Activated B cell treated with CpG ODN at 0.5 μM for 24 hours (primary cell): ENCODE measurements at regions of chr12 and their contacts with region 1.

Region 1: GRCh38 chr12:122902854-122903692 is 7.1 kb upstream of the VPS37B start:
- DNase-seq: no peak
- ATAC-seq: no peak
- H3K4me3 Mint-ChIP-seq: no peak overlapping the region
- H3K27ac Mint-ChIP-seq: peak overlapping the region; percentile 70
- H3K4me1 Mint-ChIP-seq: peaks cover 53% of the 10 kb centered on the region
- H3K27me3 Mint-ChIP-seq: no peaks in the 10 kb centered on the region
- CTCF ChIP-seq: no peak

Region 2: GRCh38 chr12:121637231-121637914 is 1265.7 kb before region 1 on chr12:
- CTCF ChIA-PET with region 1: no interaction called
- POLR2A ChIA-PET with region 1: interaction called, 13 read pairs
- intact Hi-C with region 1: no loop called
- DNase-seq: peak; percentile 52
- ATAC-seq: peak; percentile 88
- H3K4me3 Mint-ChIP-seq: peak overlapping the region; percentile 53
- H3K27ac Mint-ChIP-seq: peak overlapping the region; percentile 84
- H3K4me1 Mint-ChIP-seq: peaks cover 50% of the 10 kb centered on the region
- H3K27me3 Mint-ChIP-seq: no peaks in the 10 kb centered on the region
- CTCF ChIP-seq: no peak

Region 3: DNA sequence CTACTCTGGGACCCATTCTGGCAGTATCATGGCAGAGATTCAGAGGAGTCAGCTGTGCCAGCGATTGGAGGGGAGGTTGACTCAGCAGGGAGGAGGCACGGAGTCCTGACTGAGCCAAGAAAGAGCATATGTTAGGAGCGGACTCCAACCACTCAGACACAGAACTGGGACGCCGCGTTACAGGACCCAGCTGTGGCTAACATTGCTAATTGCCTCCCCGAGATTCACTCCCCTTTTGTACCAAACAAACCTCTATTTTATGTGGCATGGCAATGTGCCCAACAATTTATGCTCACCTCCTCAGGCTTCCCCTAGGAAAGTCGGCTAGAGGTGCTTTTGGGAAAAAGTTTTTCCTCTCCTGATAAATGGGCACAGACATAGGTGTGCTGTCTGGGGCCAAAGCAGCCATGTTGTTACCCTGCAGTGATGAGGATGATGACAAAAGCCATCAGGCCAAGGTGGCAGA is 465.4 kb before region 1 on chr12:
- CTCF ChIA-PET with region 1: no interaction called
- POLR2A ChIA-PET with region 1: no interaction called
- intact Hi-C with region 1: no loop called
- DNase-seq: no peak
- ATAC-seq: no peak
- H3K4me3 Mint-ChIP-seq: no peak overlapping the region
- H3K27ac Mint-ChIP-seq: no peak overlapping the region
- H3K4me1 Mint-ChIP-seq: no peaks in the 10 kb centered on the region
- H3K27me3 Mint-ChIP-seq: no peaks in the 10 kb centered on the region
- CTCF ChIP-seq: no peak

Region 4: GRCh38 chr12:122871851-122872780 is 31.0 kb before region 1 on chr12:
- CTCF ChIA-PET with region 1: interaction called, 3 read pairs
- POLR2A ChIA-PET with region 1: interaction called, 47 read pairs
- intact Hi-C with region 1: loop called (anchors 1 kb)
- DNase-seq: peak; percentile 46
- ATAC-seq: peak; percentile 66
- H3K4me3 Mint-ChIP-seq: peak overlapping the region; percentile 84
- H3K27ac Mint-ChIP-seq: peak overlapping the region; percentile 93
- H3K4me1 Mint-ChIP-seq: peaks cover 91% of the 10 kb centered on the region
- H3K27me3 Mint-ChIP-seq: no peaks in the 10 kb centered on the region
- CTCF ChIP-seq: no peak

Region 5: GRCh38 chr12:122927756-122928403 is 24.8 kb after region 1 on chr12:
- CTCF ChIA-PET with region 1: no interaction called
- POLR2A ChIA-PET with region 1: interaction called, 16 read pairs
- intact Hi-C with region 1: loop called (anchors 5 kb)
- DNase-seq: no peak
- ATAC-seq: no peak
- H3K4me3 Mint-ChIP-seq: peak overlapping the region; percentile 57
- H3K27ac Mint-ChIP-seq: peak overlapping the region; percentile 82
- H3K4me1 Mint-ChIP-seq: peaks cover 38% of the 10 kb centered on the region
- H3K27me3 Mint-ChIP-seq: no peaks in the 10 kb centered on the region
- CTCF ChIP-seq: no peak

Region 6: DNA sequence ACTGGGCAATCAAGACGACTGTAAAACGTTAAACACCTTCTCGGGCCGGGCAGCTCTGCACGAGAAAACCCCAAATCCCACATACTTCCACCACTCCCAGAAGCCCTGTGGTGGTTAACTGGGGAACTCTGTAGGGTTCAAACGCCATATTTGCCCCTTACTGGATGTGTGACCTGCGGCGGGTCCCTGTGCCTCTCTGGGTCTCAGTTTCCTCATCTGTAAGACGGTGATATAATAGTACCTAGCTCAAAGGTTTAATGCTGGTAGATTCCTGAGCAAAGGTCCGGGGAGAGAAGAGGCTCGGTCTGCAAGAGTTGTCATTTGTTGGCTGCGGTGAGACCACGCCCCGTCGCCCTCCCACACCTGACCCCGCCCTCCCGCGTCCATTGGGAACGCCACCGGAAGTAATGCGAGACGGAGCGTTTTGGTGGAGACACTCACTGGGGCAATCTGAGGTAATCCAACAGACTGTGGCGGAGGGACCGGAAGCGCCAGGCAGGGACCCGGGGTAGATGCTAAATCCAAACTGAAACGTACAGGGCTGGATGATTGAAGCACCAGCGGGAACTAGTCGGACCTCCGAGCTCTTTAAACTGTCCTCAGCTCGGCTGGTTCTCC is 71.3 kb after region 1 on chr12:
- CTCF ChIA-PET with region 1: no interaction called
- POLR2A ChIA-PET with region 1: interaction called, 8 read pairs
- intact Hi-C with region 1: loop called (anchors 2 kb)
- DNase-seq: peak; percentile 96
- ATAC-seq: peak; percentile 87
- H3K4me3 Mint-ChIP-seq: peak overlapping the region; percentile 98
- H3K27ac Mint-ChIP-seq: peak overlapping the region; percentile 99
- H3K4me1 Mint-ChIP-seq: peaks cover 28% of the 10 kb centered on the region
- H3K27me3 Mint-ChIP-seq: no peaks in the 10 kb centered on the region
- CTCF ChIP-seq: no peak